ENCODE measurements at regions of chr18 and their contacts with region 1.

Region 1: DNA sequence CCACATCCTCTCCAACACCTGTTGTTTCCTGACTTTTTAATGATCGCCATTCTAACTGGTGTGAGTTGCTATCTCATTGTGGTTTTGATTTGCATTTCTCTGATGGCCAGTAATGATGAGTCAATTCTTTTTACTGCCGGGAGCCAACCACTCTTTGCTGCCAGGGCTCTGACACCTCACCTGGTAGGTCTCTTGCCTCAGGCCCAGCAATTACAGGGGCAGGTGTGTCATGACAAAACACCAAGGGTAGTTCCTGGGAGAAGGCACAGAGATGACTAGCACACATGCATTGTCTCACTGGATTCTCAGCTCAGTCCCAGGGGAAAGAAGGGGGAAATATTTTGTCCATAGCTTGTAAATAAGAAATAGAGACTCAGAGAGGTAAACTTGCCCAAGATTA is 122.3 kb downstream of the CHST9 start:
- DNase-seq: no peak
- H3K4me3 ChIP-seq: no peak overlapping the region
- H3K27ac ChIP-seq: no peak overlapping the region
- H3K27me3 ChIP-seq: no peaks in the 10 kb centered on the region
- CTCF ChIP-seq: no peak

Region 2: GRCh38 chr18:26863122-26863879 is 199.5 kb before region 1 on chr18:
- intact Hi-C with region 1: no loop called
- DNase-seq: peak; percentile 37 to 87 (median 76)
- H3K4me3 ChIP-seq: peak overlapping the region; percentile 11 to 67 (median 53)
- H3K27ac ChIP-seq: peak overlapping the region in 58 of 59 donors; percentile 61 to 96 (median 88)
- H3K27me3 ChIP-seq: peaks cover 0 to 34% (median 0%) of the 10 kb centered on the region in 45 donors
- CTCF ChIP-seq: no peak

Region 3: DNA sequence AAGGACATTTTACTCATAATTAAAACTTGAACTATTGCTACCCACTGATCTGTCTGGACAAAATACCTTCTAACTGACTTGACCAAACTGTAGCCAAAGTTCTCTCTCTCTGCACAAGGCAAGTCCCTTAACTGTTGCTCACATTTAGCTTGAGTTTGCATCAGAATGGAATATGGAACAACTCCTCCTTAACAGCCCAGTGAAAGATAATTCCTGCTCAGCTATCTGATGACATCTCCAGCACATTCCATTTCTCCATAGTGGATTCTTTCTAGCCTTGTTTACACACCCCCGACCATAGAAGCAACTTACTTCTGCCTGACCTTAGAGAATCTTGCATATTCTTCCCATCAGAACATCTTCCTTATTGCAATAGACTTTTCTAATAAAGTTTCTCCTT is 1431.3 kb after region 1 on chr18:
- intact Hi-C with region 1: loop called in 1 of 2 experiments (anchors 10 kb)
- DNase-seq: no peak
- H3K4me3 ChIP-seq: no peak overlapping the region
- H3K27ac ChIP-seq: no peak overlapping the region
- H3K27me3 ChIP-seq: no peaks in the 10 kb centered on the region
- CTCF ChIP-seq: no peak

Measured in dorsolateral prefrontal cortex (tissue), 120 donors.